Activated T-helper 1 cell treated with anti-CD3 and anti-CD28 coated beads, Interleukin-12 subunit alpha, Interleukin-12 subunit beta, Interleukin-2, Interleukin-4 antibody, amounts not matched to agents 30 ng/mL and 10 ng/mL and 1 ng/mL, durations not matched to agents 14 hours and 24 hours and 36 hours (primary cell): ENCODE measurements at regions of chr1 and their contacts with region 1.

Region 1: GRCh38 chr1:117001254-117001927 is at the start of gene CD101:
- DNase-seq: no peak
- H3K4me3 Mint-ChIP-seq: peak within 1 kb of the TSS; percentile 3
- H3K27ac Mint-ChIP-seq: peak within 1 kb of the TSS; percentile 79
- H3K4me1 Mint-ChIP-seq: peaks cover 36% of the 10 kb centered on the region
- H3K27me3 Mint-ChIP-seq: peaks cover 3% of the 10 kb centered on the region
- total RNA-seq, gene CD101: 0.80 and 1.0 TPM in 2 replicates

Region 2: DNA sequence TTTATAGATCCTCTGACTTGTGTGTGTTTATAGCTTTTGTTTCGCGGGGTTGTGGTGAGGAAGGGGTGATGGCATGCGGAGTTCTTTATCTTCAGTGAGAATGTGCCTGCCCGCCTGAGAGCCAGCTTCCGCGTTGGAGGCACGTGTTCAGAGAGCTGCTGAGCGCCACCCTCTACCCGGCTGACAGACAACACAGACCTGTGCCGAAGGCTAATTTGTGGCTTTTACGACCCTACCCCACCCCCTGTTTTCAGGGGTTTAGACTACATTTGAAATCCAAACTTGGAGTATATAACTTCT is 14.2 kb before region 1 on chr1:
- intact Hi-C with region 1: loop called (anchors 2 kb)
- DNase-seq: peak; percentile 48
- H3K4me3 Mint-ChIP-seq: peak overlapping the region; percentile 80
- H3K27ac Mint-ChIP-seq: peak overlapping the region; percentile 92
- H3K4me1 Mint-ChIP-seq: peaks cover 49% of the 10 kb centered on the region
- H3K27me3 Mint-ChIP-seq: no peaks in the 10 kb centered on the region

Region 3: DNA sequence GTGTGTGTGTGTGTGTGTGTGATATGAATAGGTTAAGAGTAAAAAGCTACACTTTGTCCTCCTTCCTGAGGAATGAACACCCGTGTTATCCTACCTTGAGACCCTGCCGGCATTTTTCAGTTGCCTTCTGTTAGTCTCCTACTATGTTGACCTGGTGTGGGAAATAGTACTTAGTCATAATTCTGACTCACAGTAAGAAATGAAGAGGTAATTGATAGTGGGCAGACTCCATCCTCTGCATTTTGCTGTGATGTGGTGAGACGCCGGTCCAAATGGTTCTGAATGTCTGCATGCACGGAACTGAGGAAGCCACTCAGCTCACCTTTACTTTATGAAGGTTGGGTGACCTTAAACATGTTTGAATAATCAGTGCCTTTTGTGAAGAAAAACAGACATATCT is 12.8 kb after region 1 on chr1:
- intact Hi-C with region 1: loop called (anchors 2 kb)
- DNase-seq: no peak
- H3K4me3 Mint-ChIP-seq: no peak overlapping the region
- H3K27ac Mint-ChIP-seq: no peak overlapping the region
- H3K4me1 Mint-ChIP-seq: peaks cover 53% of the 10 kb centered on the region
- H3K27me3 Mint-ChIP-seq: no peaks in the 10 kb centered on the region

Region 4: GRCh38 chr1:118039170-118039569 is 1037.8 kb after region 1 on chr1:
- intact Hi-C with region 1: no loop called
- DNase-seq: no peak
- H3K4me3 Mint-ChIP-seq: no peak overlapping the region
- H3K27ac Mint-ChIP-seq: no peak overlapping the region
- H3K4me1 Mint-ChIP-seq: no peaks in the 10 kb centered on the region
- H3K27me3 Mint-ChIP-seq: peaks cover 8% of the 10 kb centered on the region